ENCODE measurements at regions of chr16 and their contacts with region 1.

Region 1: DNA sequence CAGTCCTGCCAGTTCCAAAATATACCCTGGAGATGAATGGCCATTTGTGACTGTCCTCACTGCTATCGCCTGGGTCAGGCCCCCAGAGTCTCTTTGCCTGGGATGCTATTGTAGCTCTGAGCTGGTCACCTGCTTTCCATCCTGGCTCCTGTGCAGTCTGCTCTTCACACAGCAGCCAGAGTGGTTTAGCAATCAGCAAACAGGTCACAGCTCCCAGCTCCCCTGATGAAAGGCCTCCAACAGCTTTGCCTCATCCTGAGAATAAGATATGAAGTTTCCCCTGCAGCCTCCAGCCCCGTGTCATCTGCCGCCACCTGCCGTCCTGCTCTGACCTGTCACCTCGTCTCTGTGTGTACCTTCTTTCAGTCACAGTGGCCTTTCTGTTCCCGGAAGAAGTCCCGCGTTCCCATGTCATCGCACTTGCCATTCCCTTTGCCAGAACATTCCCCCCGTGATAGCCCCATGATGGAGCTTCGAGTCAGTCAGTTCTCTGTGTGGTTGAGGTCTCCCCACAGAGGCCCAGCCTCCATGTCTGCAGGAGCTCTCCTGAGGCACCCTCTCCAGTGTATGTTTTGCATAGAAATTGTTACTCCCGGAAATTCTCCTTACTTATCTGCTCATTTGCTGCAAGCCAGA is 281.5 kb downstream of the SNX29 start:
- DNase-seq: peak; percentile 85
- H3K4me3 ChIP-seq: peak overlapping the region; percentile 45
- H3K27ac ChIP-seq: peak overlapping the region; percentile 97
- H3K4me1 ChIP-seq: peaks cover 85% of the 10 kb centered on the region
- CTCF ChIP-seq: peak; percentile 88

Region 2: GRCh38 chr16:12095275-12096156 is 162.5 kb before region 1 on chr16:
- CTCF ChIA-PET with region 1: interaction called, 22 read pairs
- POLR2A ChIA-PET with region 1: interaction called, 4 read pairs
- intact Hi-C with region 1: loop called (anchors 1 kb)
- DNase-seq: peak; percentile 79
- H3K4me3 ChIP-seq: no peak overlapping the region
- H3K27ac ChIP-seq: no peak overlapping the region
- H3K4me1 ChIP-seq: peaks cover 30% of the 10 kb centered on the region
- CTCF ChIP-seq: peak; percentile 100

Region 3: GRCh38 chr16:12147681-12148080 is 110.4 kb before region 1 on chr16:
- CTCF ChIA-PET with region 1: no interaction called
- POLR2A ChIA-PET with region 1: interaction called, 4 read pairs
- intact Hi-C with region 1: loop called (anchors 1 kb)
- DNase-seq: peak; percentile 93
- H3K4me3 ChIP-seq: peak overlapping the region; percentile 60
- H3K27ac ChIP-seq: peak overlapping the region; percentile 97
- H3K4me1 ChIP-seq: peaks cover 92% of the 10 kb centered on the region
- CTCF ChIP-seq: 0 out of 2 replicates have a peak, but pooled peaks have one; percentile 29

Region 4: DNA sequence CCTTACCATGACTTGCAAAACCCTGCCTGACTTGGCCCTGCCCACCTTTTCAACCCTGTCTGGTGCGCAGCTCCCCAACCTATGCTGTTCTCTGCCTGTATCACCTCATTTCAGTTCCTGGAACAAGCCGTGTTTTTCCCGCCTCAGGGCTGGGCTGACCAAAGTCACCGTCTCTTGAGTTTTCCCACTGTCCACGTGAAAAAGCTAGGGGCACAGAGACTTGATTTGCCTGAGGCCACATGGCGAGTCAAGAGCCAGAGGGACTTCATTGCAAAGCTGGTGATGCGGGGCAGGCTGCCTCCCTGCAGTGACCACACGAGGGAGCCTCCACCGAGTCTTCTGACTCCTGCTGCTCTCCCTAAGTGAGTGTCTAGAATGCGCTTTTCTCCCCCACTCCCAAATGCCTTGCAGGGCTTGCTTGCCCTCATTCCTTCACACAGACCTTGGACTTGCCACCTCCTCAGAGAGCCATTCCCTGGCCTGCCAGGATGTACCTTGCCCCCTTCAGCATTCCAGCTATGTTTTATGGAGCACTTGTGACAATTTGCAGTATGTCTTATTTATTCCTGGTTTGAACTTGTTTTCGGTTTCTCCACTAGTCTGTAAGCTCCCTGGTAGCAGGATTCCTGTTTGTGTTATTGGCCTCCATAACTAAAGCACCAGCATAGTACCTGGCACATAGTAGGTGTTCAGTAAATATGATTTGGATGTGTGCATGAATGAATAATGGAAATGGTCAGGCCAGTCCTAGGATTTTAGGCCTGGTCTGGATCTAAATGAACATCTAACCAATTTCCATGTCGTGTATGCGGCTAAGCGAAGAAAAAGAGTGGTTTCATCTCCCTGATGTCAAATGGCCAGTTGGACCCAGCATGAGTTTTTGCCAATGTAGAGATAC is 29.2 kb before region 1 on chr16:
- CTCF ChIA-PET with region 1: interaction called, 28 read pairs
- POLR2A ChIA-PET with region 1: interaction called, 12 read pairs
- intact Hi-C with region 1: loop called (anchors 1 kb)
- DNase-seq: peak; percentile 89
- H3K4me3 ChIP-seq: no peak overlapping the region
- H3K27ac ChIP-seq: peak overlapping the region; percentile 66
- H3K4me1 ChIP-seq: peaks cover 71% of the 10 kb centered on the region
- CTCF ChIP-seq: peak; percentile 96

Region 5: GRCh38 chr16:12289175-12290063 is 31.4 kb after region 1 on chr16:
- CTCF ChIA-PET with region 1: interaction called, 6 read pairs
- POLR2A ChIA-PET with region 1: interaction called, 7 read pairs
- intact Hi-C with region 1: loop called (anchors 1 kb)
- DNase-seq: peak; percentile 51
- H3K4me3 ChIP-seq: no peak overlapping the region
- H3K27ac ChIP-seq: peak overlapping the region; percentile 95
- H3K4me1 ChIP-seq: peaks cover 93% of the 10 kb centered on the region
- CTCF ChIP-seq: no peak

Measured in OCI-LY7 (cell line).